ENCODE measurements at regions of chr13 and their contacts with region 1.

Region 1: GRCh38 chr13:111129465-111130115 is 14.5 kb downstream of the ARHGEF7 start:
- DNase-seq: no peak
- ATAC-seq: no peak
- H3K4me3 ChIP-seq: no peak overlapping the region
- H3K27ac ChIP-seq: no peak overlapping the region
- H3K4me1 ChIP-seq: peaks cover 12% of the 10 kb centered on the region
- H3K27me3 ChIP-seq: no peaks in the 10 kb centered on the region
- CTCF ChIP-seq: no peak

Region 2: GRCh38 chr13:110743687-110744086 is 385.9 kb before region 1 on chr13:
- intact Hi-C with region 1: loop called in 1 of 2 experiments (anchors 5 kb)
- DNase-seq: no peak
- ATAC-seq: no peak
- H3K4me3 ChIP-seq: no peak overlapping the region
- H3K27ac ChIP-seq: no peak overlapping the region
- H3K4me1 ChIP-seq: no peaks in the 10 kb centered on the region
- H3K27me3 ChIP-seq: no peaks in the 10 kb centered on the region
- CTCF ChIP-seq: no peak

Region 3: GRCh38 chr13:110965038-110965754 is 164.4 kb before region 1 on chr13:
- intact Hi-C with region 1: no loop called
- DNase-seq: no peak
- ATAC-seq: peak in 3 of 4 donors; percentile 56 to 86 (median 81)
- H3K4me3 ChIP-seq: no peak overlapping the region
- H3K27ac ChIP-seq: no peak overlapping the region
- H3K4me1 ChIP-seq: no peaks in the 10 kb centered on the region
- H3K27me3 ChIP-seq: no peaks in the 10 kb centered on the region
- CTCF ChIP-seq: no peak

Measured in psoas muscle (tissue), 8 donors.